Mammary epithelial cell (primary cell): ENCODE measurements at regions of chr3 and their contacts with region 1.

Region 1: GRCh38 chr3:78659386-78659987 is 1108.3 kb downstream of the ROBO1 start:
- DNase-seq: no peak
- H3K4me3 ChIP-seq: no peak overlapping the region
- H3K27ac ChIP-seq: no peak overlapping the region
- H3K4me1 ChIP-seq: no peaks in the 10 kb centered on the region
- H3K27me3 ChIP-seq: no peaks in the 10 kb centered on the region
- CTCF ChIP-seq: peak; percentile 33 to 58

Region 2: GRCh38 chr3:78978037-78978436 is 318.6 kb after region 1 on chr3:
- CTCF ChIA-PET with region 1: no interaction called
- dilution Hi-C with region 1: no loop called
- in situ Hi-C with region 1: loop called (anchors 10 to 25 kb)
- intact Hi-C with region 1: loop called (anchors 1 kb)
- DNase-seq: peak; percentile 38
- H3K4me3 ChIP-seq: no peak overlapping the region
- H3K27ac ChIP-seq: no peak overlapping the region
- H3K4me1 ChIP-seq: peaks cover 3% of the 10 kb centered on the region
- H3K27me3 ChIP-seq: no peaks in the 10 kb centered on the region
- CTCF ChIP-seq: peak; percentile 48 to 65

Region 3: DNA sequence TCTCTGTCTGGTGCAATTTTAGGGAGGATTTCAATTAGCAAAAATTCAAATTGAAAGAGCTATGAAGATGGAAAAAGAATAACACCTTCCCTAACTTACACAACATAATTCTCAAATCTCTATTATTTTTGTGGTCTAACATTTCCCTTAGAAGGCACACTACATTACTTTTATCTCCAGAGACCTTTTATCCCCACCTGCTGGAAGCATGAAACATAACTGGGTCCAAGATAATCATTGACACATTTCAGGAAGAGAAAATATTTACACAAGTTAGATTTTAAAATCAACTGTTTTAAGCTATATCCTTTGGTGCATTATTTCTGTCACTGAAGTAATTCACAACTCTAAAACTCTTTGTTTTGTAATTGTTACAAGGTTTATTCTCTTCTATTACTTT is 328.8 kb after region 1 on chr3:
- CTCF ChIA-PET with region 1: no interaction called
- dilution Hi-C with region 1: no loop called
- in situ Hi-C with region 1: loop called in 1 of 2 experiments (anchors 25 kb)
- intact Hi-C with region 1: no loop called
- DNase-seq: no peak
- H3K4me3 ChIP-seq: no peak overlapping the region
- H3K27ac ChIP-seq: no peak overlapping the region
- H3K4me1 ChIP-seq: no peaks in the 10 kb centered on the region
- H3K27me3 ChIP-seq: no peaks in the 10 kb centered on the region
- CTCF ChIP-seq: peak; percentile 27 to 55

Region 4: DNA sequence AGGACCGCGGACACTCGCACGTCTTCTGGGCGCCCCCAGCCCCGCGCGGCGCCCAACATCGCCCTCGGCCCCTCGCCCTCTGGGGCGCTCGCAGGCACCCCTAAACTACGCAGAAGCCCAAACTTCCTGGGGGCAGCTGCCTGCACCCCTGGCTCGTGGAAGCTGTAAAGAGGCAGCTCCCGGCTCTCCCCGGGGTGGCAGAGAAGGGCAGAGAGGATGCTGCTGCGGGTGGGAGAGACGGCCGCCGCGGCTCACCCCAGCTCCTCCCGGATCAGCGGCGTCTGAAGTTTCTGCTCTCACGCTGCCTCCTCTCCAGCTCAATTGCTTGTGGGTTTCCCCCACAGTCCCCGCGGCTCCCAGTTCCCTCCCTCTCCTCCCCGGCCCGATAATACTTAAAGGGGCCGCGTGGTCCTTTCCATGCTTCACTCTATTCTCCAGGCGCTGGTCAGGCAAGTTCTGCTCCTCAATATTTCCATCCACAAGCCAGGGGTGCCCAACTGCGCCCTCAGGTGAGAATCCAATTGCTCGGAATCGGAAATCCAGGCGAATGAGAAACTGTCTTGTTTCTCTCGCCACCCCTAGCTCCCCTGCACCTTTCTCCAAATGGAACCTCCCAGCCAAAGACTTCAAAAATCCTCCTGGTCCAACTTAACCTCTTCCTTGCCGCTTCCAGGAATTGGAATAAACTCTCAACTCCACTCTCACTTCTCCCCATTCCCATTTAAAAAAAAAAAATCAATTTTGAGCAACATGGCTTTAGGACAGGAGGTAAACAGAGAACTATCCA is 359.8 kb after region 1 on chr3:
- CTCF ChIA-PET with region 1: no interaction called
- dilution Hi-C with region 1: no loop called
- in situ Hi-C with region 1: loop called in 1 of 2 experiments (anchors 10 kb)
- intact Hi-C with region 1: loop called (anchors 5 kb)
- DNase-seq: peak; percentile 97
- H3K4me3 ChIP-seq: peak overlapping the region; percentile 85 to 93 (median 90)
- H3K27ac ChIP-seq: peak overlapping the region; percentile 88
- H3K4me1 ChIP-seq: peaks cover 18% of the 10 kb centered on the region
- H3K27me3 ChIP-seq: no peaks in the 10 kb centered on the region
- CTCF ChIP-seq: no peak

Region 5: GRCh38 chr3:79032686-79033318 is 373.3 kb after region 1 on chr3:
- CTCF ChIA-PET with region 1: no interaction called
- dilution Hi-C with region 1: no loop called
- in situ Hi-C with region 1: loop called (anchors 10 kb)
- intact Hi-C with region 1: loop called (anchors 1 kb)
- DNase-seq: peak; percentile 35
- H3K4me3 ChIP-seq: no peak overlapping the region
- H3K27ac ChIP-seq: no peak overlapping the region
- H3K4me1 ChIP-seq: no peaks in the 10 kb centered on the region
- H3K27me3 ChIP-seq: no peaks in the 10 kb centered on the region
- CTCF ChIP-seq: peak; percentile 55 to 63

Region 6: DNA sequence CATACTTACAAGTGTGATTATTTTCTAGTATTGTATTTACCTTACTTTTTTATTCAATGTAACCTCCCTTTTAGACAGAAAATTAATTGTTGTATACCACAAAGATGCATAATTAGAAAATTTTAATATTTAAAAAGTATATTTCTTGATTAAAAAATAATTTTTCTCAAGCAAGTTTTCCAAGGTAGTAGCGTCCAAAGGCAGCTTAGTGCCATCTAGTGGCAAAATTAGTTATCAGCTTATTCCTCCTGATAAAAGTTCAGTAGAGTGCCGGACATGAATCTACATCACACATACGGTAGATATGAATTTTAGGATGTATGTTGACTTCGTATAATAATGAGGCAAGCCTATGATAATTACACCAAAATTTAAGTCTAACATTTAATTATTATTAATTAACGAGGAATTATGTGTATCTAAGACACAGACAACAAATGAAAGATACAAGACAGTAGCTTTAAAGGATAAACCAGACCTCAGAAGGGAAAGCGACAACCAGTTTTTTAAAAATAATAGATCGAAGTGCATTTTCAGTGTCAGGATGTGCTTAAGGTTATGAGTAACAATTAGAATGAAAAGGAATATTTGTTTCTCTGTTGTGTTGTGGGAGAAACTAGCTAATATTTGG is 702.4 kb after region 1 on chr3:
- CTCF ChIA-PET with region 1: no interaction called
- dilution Hi-C with region 1: no loop called
- in situ Hi-C with region 1: loop called (anchors 25 kb)
- intact Hi-C with region 1: loop called (anchors 5 kb)
- DNase-seq: peak; percentile 29
- H3K4me3 ChIP-seq: no peak overlapping the region
- H3K27ac ChIP-seq: no peak overlapping the region
- H3K4me1 ChIP-seq: peaks cover 3% of the 10 kb centered on the region
- H3K27me3 ChIP-seq: no peaks in the 10 kb centered on the region
- CTCF ChIP-seq: peak; percentile 69 to 75

Region 7: GRCh38 chr3:79521238-79521848 is 861.9 kb after region 1 on chr3:
- CTCF ChIA-PET with region 1: no interaction called
- dilution Hi-C with region 1: no loop called
- in situ Hi-C with region 1: no loop called
- intact Hi-C with region 1: loop called (anchors 5 kb)
- DNase-seq: peak; percentile 24
- H3K4me3 ChIP-seq: no peak overlapping the region
- H3K27ac ChIP-seq: no peak overlapping the region
- H3K4me1 ChIP-seq: no peaks in the 10 kb centered on the region
- H3K27me3 ChIP-seq: no peaks in the 10 kb centered on the region
- CTCF ChIP-seq: peak; percentile 56